ENCODE measurements at regions of chr13 and their contacts with region 1.

Region 1: GRCh38 chr13:94416454-94417080 is 62.9 kb downstream of the DCT start:
- DNase-seq: no peak
- H3K4me3 Mint-ChIP-seq: no peak overlapping the region
- H3K27ac Mint-ChIP-seq: no peak overlapping the region
- H3K4me1 Mint-ChIP-seq: peaks cover 22% of the 10 kb centered on the region
- H3K27me3 Mint-ChIP-seq: no peaks in the 10 kb centered on the region

Region 2: GRCh38 chr13:94327318-94327717 is 89.2 kb before region 1 on chr13:
- intact Hi-C with region 1: loop called (anchors 10 kb)
- DNase-seq: no peak
- H3K4me3 Mint-ChIP-seq: peak overlapping the region; percentile 45
- H3K27ac Mint-ChIP-seq: no peak overlapping the region
- H3K4me1 Mint-ChIP-seq: peaks cover 52% of the 10 kb centered on the region
- H3K27me3 Mint-ChIP-seq: peaks cover 6% of the 10 kb centered on the region

Region 3: GRCh38 chr13:94369972-94370436 is 46.6 kb before region 1 on chr13:
- intact Hi-C with region 1: no loop called
- DNase-seq: no peak
- H3K4me3 Mint-ChIP-seq: no peak overlapping the region
- H3K27ac Mint-ChIP-seq: no peak overlapping the region
- H3K4me1 Mint-ChIP-seq: no peaks in the 10 kb centered on the region
- H3K27me3 Mint-ChIP-seq: peaks cover 4% of the 10 kb centered on the region

Region 4: GRCh38 chr13:94549232-94550061 is 132.9 kb after region 1 on chr13:
- intact Hi-C with region 1: loop called (anchors 1 kb)
- DNase-seq: peak; percentile 87
- H3K4me3 Mint-ChIP-seq: peak overlapping the region; percentile 77
- H3K27ac Mint-ChIP-seq: peak overlapping the region; percentile 95
- H3K4me1 Mint-ChIP-seq: peaks cover 12% of the 10 kb centered on the region
- H3K27me3 Mint-ChIP-seq: peaks cover 4% of the 10 kb centered on the region

Region 5: DNA sequence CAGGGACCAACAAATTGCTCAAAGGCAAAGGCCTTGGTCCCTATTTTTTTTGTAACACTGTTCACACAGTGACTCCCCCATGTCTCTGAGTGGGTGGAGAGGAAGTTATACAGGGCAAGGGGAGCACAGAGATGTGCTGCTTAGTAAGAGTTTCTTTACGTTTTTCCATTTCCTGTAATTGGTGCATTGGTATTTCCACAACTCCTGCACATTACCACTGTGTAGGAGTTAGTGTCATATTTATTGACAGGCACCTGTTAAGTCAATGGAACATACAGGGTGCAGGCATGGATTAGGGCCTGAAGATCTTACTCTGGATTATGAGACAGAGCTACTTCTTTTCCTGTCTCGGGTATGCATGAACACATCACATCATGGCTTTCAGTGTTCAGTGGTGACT is 250.6 kb after region 1 on chr13:
- intact Hi-C with region 1: loop called (anchors 1 kb)
- DNase-seq: no peak
- H3K4me3 Mint-ChIP-seq: peak overlapping the region; percentile 6
- H3K27ac Mint-ChIP-seq: peak overlapping the region; percentile 87
- H3K4me1 Mint-ChIP-seq: peaks cover 48% of the 10 kb centered on the region
- H3K27me3 Mint-ChIP-seq: peaks cover 9% of the 10 kb centered on the region

Measured in activated T-helper 2 cell treated with anti-CD3 and anti-CD28 coated beads, Interferon-gamma antibody, Interleukin-2, Interleukin-4, amounts not matched to agents 10 μg/mL and 5 μg/mL and 100 μg/mL, durations not matched to agents 14 hours and 24 hours and 36 hours (primary cell).